ENCODE measurements at regions of chr12 and their contacts with region 1.

Region 1: GRCh38 chr12:98644711-98645402 is at the starts of genes APAF1 and IKBIP:
- DNase-seq: peak; percentile 93 to 99
- H3K4me3 ChIP-seq: peak within 1 kb of the TSS; percentile 75 to 98
- H3K27ac ChIP-seq: peak within 1 kb of the TSS; percentile 72 to 85
- H3K4me1 ChIP-seq: peaks cover 3 to 7% of the 10 kb centered on the region in 2 donors
- H3K27me3 ChIP-seq: no peaks in the 10 kb centered on the region
- CTCF ChIP-seq: no peak
- total RNA-seq, gene APAF1: 15.5 TPM
- total RNA-seq, gene IKBIP: 12.3 TPM

Region 2: GRCh38 chr12:98424726-98425401 is 220.0 kb before region 1 on chr12:
- intact Hi-C with region 1: loop called (anchors 10 kb)
- DNase-seq: peak in 1 of 2 donors; percentile 81
- H3K4me3 ChIP-seq: no peak overlapping the region
- H3K27ac ChIP-seq: no peak overlapping the region
- H3K4me1 ChIP-seq: peaks cover 0 to 6% of the 10 kb centered on the region in 2 donors
- H3K27me3 ChIP-seq: no peaks in the 10 kb centered on the region
- CTCF ChIP-seq: peak; percentile 38 to 79 (median 65)

Region 3: DNA sequence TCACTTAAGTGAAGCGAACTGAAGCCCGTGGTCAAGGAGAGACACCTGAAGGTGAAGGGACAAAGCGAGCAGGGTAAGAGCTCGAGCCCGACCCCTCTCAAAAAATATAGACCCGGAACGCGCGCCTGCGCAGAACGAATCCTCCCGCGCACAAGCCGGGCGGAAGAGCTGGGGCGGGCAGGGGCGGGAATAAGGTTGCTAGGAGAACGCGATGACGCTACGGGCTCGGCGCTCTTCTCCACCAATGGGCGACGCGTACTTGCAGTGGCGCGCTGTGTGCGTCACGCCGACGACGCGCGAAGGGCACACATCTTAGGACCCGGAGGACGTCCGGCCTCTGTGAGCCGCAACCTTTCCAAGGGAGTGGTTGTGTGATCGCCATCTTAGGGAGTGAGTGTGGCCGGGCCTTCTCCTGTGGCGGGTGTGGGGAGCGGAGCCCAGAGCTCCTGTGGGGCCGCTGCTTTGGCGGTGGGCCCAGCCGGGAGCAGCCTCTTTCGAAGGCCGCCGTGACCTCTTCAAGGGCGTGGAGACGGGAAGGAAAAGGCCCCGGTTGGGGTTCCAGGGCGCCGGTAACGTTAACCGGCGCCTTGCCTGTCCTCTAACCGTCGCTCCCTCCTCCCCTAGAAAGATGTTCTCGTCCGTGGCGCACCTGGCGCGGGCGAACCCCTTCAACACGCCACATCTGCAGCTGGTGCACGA is 51.4 kb before region 1 on chr12 and contains the start of gene SLC25A3:
- intact Hi-C with region 1: loop called (anchors 1 kb)
- DNase-seq: peak; percentile 92 to 98
- H3K4me3 ChIP-seq: peak within 1 kb of the TSS; percentile 91 to 99
- H3K27ac ChIP-seq: peak within 1 kb of the TSS; percentile 97 to 98
- H3K4me1 ChIP-seq: peaks cover 0 to 11% of the 10 kb centered on the region in 2 donors
- H3K27me3 ChIP-seq: no peaks in the 10 kb centered on the region
- CTCF ChIP-seq: no peak
- total RNA-seq, gene SLC25A3: 437 TPM

Measured in ascending aorta (tissue), 2 donors.